Endothelial cell of umbilical vein (primary cell): ENCODE measurements at regions of chr17 and their contacts with region 1.

Region 1: GRCh38 chr17:17681187-17681848 is at the start of gene RAI1:
- DNase-seq: peak; percentile 75
- H3K4me3 ChIP-seq: peak within 1 kb of the TSS; percentile 65 to 91 (median 69)
- H3K27ac ChIP-seq: peak within 1 kb of the TSS; percentile 79
- H3K4me1 ChIP-seq: peaks cover 34% of the 10 kb centered on the region
- H3K27me3 ChIP-seq: no peaks in the 10 kb centered on the region
- CTCF ChIP-seq: peak; percentile 51 to 79
- POLR2A ChIP-seq: no peak
- total RNA-seq, gene RAI1: 43.3 and 47.3 TPM in 2 replicates

Region 2: GRCh38 chr17:17416007-17416399 is 265.3 kb before region 1 on chr17:
- CTCF ChIA-PET with region 1: no interaction called
- POLR2A ChIA-PET with region 1: no interaction called
- dilution Hi-C with region 1: no loop called
- intact Hi-C with region 1: no loop called
- DNase-seq: peak; percentile 91
- H3K4me3 ChIP-seq: no peak overlapping the region
- H3K27ac ChIP-seq: peak overlapping the region; percentile 94
- H3K4me1 ChIP-seq: peaks cover 48% of the 10 kb centered on the region
- H3K27me3 ChIP-seq: no peaks in the 10 kb centered on the region
- CTCF ChIP-seq: no peak
- POLR2A ChIP-seq: no peak

Region 3: GRCh38 chr17:17712268-17712924 is 31.1 kb after region 1 on chr17:
- CTCF ChIA-PET with region 1: interaction called, 6 read pairs
- POLR2A ChIA-PET with region 1: no interaction called
- dilution Hi-C with region 1: no loop called
- intact Hi-C with region 1: loop called (anchors 1 kb)
- DNase-seq: peak; percentile 94
- H3K4me3 ChIP-seq: no peak overlapping the region
- H3K27ac ChIP-seq: peak overlapping the region; percentile 98
- H3K4me1 ChIP-seq: peaks cover 33% of the 10 kb centered on the region
- H3K27me3 ChIP-seq: no peaks in the 10 kb centered on the region
- CTCF ChIP-seq: no peak
- POLR2A ChIP-seq: no peak

Region 4: DNA sequence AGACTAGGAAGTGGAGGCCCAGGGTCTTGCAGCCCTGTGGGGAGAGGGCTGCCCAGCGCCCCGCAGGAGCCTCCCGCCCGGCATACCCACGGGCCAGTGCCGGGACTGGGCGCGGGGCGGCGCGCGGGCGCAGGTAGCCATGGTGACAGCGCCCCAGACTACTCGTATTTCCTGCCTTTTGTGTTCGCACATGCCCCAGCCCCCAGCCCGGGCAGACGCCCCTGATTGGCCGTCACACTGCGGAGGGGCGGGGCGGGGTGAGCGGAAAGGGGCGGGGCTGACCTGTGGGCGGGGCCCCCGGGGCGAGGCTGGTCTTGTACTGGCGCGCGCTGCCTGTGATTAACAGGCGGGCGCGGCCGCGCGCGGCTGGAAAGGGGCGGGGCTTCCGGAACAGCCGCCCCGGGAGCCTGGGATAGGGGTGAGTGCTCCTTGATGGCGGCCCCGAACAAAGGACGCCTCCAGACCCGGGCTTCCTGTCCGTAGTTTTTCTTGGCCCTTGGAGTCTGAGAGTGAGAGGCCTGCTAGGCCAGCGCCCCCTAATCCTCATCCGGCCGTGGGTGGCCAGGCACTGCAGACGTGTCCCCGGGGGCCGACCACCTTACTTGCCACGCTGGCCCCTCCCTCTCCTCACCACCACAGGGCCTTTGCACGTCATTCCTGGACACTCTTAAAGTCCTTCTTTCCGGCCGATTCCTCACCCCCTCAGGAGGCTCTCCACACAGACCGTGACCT is 70.9 kb after region 1 on chr17:
- CTCF ChIA-PET with region 1: interaction called, 3 read pairs
- POLR2A ChIA-PET with region 1: no interaction called
- dilution Hi-C with region 1: no loop called
- intact Hi-C with region 1: loop called (anchors 1 kb)
- DNase-seq: peak; percentile 96
- H3K4me3 ChIP-seq: peak overlapping the region in 2 of 3 experiments; percentile 6 to 14
- H3K27ac ChIP-seq: peak overlapping the region; percentile 81
- H3K4me1 ChIP-seq: peaks cover 39% of the 10 kb centered on the region
- H3K27me3 ChIP-seq: no peaks in the 10 kb centered on the region
- CTCF ChIP-seq: peak; percentile 29 to 54
- POLR2A ChIP-seq: peak; percentile 33

Region 5: DNA sequence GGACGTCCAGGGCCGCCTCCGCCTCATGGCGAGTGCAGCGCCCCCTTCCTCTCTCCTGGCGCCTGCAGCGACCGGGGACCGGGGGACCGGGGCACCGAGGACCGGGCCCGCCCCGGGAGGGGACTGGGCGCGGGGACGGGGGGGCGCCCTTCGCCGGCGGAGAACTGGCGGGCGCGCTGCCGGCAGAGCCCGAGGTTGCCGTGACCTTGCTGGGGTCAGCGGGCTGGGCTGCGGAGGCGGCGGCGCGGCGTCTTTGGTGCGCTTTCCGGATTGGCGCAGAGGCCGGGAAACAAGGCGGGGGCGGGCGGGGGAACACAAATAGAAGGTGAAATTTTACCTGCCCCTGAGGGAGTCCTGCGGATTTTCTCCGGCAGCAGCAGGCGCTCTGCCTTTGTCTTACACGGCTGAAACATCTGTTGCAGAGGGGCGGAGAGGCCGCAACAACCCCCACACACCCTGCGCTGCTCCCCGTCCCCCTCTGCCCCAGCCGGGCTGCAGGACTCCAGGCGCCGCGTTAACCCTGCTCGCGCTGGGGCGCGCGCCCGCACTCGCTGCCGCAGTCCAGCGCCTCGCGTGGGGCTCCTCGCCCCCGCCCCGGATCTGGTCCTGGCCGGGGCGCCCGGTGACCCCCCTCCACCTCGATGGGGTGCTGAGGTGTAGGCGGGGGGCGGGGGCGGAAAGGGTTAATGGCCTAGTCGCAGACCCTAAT is 102.0 kb after region 1 on chr17:
- CTCF ChIA-PET with region 1: interaction called, 5 read pairs
- POLR2A ChIA-PET with region 1: no interaction called
- dilution Hi-C with region 1: no loop called
- intact Hi-C with region 1: loop called (anchors 2 kb)
- DNase-seq: peak; percentile 32
- H3K4me3 ChIP-seq: peak overlapping the region; percentile 23 to 30 (median 26)
- H3K27ac ChIP-seq: no peak overlapping the region
- H3K4me1 ChIP-seq: peaks cover 30% of the 10 kb centered on the region
- H3K27me3 ChIP-seq: no peaks in the 10 kb centered on the region
- CTCF ChIP-seq: peak in 1 of 2 donors; percentile 8
- POLR2A ChIP-seq: no peak

Region 6: GRCh38 chr17:17859909-17860765 is 178.8 kb after region 1 on chr17:
- CTCF ChIA-PET with region 1: interaction called, 15 read pairs
- POLR2A ChIA-PET with region 1: no interaction called
- dilution Hi-C with region 1: no loop called
- intact Hi-C with region 1: loop called (anchors 1 kb)
- DNase-seq: peak; percentile 59
- H3K4me3 ChIP-seq: no peak overlapping the region
- H3K27ac ChIP-seq: no peak overlapping the region
- H3K4me1 ChIP-seq: no peaks in the 10 kb centered on the region
- H3K27me3 ChIP-seq: no peaks in the 10 kb centered on the region
- CTCF ChIP-seq: peak; percentile 88 to 97
- POLR2A ChIP-seq: no peak

Region 7: GRCh38 chr17:18033442-18034099 is 352.3 kb after region 1 on chr17:
- CTCF ChIA-PET with region 1: interaction called, 5 read pairs
- POLR2A ChIA-PET with region 1: no interaction called
- dilution Hi-C with region 1: no loop called
- intact Hi-C with region 1: loop called (anchors 1 kb)
- DNase-seq: peak; percentile 78
- H3K4me3 ChIP-seq: no peak overlapping the region
- H3K27ac ChIP-seq: no peak overlapping the region
- H3K4me1 ChIP-seq: peaks cover 21% of the 10 kb centered on the region
- H3K27me3 ChIP-seq: no peaks in the 10 kb centered on the region
- CTCF ChIP-seq: peak; percentile 46 to 55
- POLR2A ChIP-seq: no peak

Region 8: GRCh38 chr17:18235743-18236256 is 554.5 kb after region 1 on chr17:
- CTCF ChIA-PET with region 1: no interaction called
- POLR2A ChIA-PET with region 1: no interaction called
- dilution Hi-C with region 1: no loop called
- intact Hi-C with region 1: no loop called
- DNase-seq: peak; percentile 72
- H3K4me3 ChIP-seq: no peak overlapping the region
- H3K27ac ChIP-seq: peak overlapping the region; percentile 89
- H3K4me1 ChIP-seq: peaks cover 13% of the 10 kb centered on the region
- H3K27me3 ChIP-seq: no peaks in the 10 kb centered on the region
- CTCF ChIP-seq: no peak
- POLR2A ChIP-seq: no peak